ENCODE measurements at regions of chr3 and their contacts with region 1.

Region 1: DNA sequence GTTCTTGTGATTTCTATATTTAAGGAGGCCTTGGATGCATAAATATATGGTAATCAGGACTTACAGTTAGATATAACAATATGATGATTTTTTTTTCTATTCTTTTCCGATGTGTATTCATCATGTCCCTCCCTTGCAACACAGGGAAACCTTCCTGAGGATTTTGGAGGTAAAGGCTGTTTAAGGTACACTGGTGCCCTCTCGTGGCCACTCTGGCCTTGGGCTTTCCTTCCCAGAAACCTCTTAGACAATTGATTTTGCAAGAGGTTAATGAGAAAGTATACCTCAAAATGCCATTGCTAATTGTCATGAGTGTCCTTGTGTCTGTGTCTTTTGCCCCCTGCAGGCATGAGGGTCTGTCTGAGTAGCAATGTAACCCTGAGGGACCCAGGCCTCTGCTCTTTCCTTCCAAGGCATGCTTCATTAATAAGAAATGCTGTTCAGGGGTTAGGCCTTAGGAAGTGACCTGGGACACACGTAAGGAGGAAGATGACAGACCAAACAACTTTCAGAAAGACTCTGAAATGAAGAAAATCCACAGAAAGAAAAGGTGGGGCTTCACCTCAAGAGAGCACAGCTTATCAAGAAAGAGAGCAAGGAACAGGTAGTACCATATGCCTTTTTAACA is 70.3 kb upstream of the PPP2R3A start:
- DNase-seq: no peak
- H3K4me3 ChIP-seq: no peak overlapping the region
- H3K27ac ChIP-seq: no peak overlapping the region
- H3K4me1 ChIP-seq: no peaks in the 10 kb centered on the region
- H3K27me3 ChIP-seq: no peaks in the 10 kb centered on the region
- CTCF ChIP-seq: peak; percentile 37 to 46 (median 41)
- POLR2A ChIP-seq: no peak

Region 2: GRCh38 chr3:134600685-134601463 is 1294.3 kb before region 1 on chr3:
- intact Hi-C with region 1: loop called (anchors 10 kb)
- DNase-seq: peak; percentile 81 to 82
- H3K4me3 ChIP-seq: no peak overlapping the region
- H3K27ac ChIP-seq: no peak overlapping the region
- H3K4me1 ChIP-seq: no peaks in the 10 kb centered on the region
- H3K27me3 ChIP-seq: no peaks in the 10 kb centered on the region
- CTCF ChIP-seq: peak; percentile 62 to 86 (median 66)
- POLR2A ChIP-seq: no peak